Activated CD4-positive, alpha-beta T cell treated with anti-CD3 and anti-CD28 coated beads for 36 hours (primary cell): ENCODE measurements at regions of chr12 and their contacts with region 1.

Region 1: GRCh38 chr12:62332598-62332997 is 72.4 kb downstream of the USP15 start:
- DNase-seq: no peak
- ATAC-seq: no peak
- H3K4me3 Mint-ChIP-seq: no peak overlapping the region
- H3K27ac Mint-ChIP-seq: no peak overlapping the region
- H3K4me1 Mint-ChIP-seq: peaks cover 22% of the 10 kb centered on the region
- H3K27me3 Mint-ChIP-seq: no peaks in the 10 kb centered on the region

Region 2: GRCh38 chr12:60501124-60501729 is 1831.4 kb before region 1 on chr12:
- CTCF ChIA-PET with region 1: no interaction called
- POLR2A ChIA-PET with region 1: no interaction called
- intact Hi-C with region 1: no loop called
- DNase-seq: no peak
- ATAC-seq: no peak
- H3K4me3 Mint-ChIP-seq: no peak overlapping the region
- H3K27ac Mint-ChIP-seq: no peak overlapping the region
- H3K4me1 Mint-ChIP-seq: no peaks in the 10 kb centered on the region
- H3K27me3 Mint-ChIP-seq: no peaks in the 10 kb centered on the region

Region 3: GRCh38 chr12:62351326-62351725 is 18.7 kb after region 1 on chr12:
- CTCF ChIA-PET with region 1: interaction called, 3 read pairs
- POLR2A ChIA-PET with region 1: no interaction called
- intact Hi-C with region 1: loop called in 1 of 2 experiments (anchors 2 kb)
- DNase-seq: no peak
- ATAC-seq: peak; percentile 64
- H3K4me3 Mint-ChIP-seq: no peak overlapping the region
- H3K27ac Mint-ChIP-seq: no peak overlapping the region
- H3K4me1 Mint-ChIP-seq: peaks cover 19% of the 10 kb centered on the region
- H3K27me3 Mint-ChIP-seq: no peaks in the 10 kb centered on the region